Activated naive CD4-positive, alpha-beta T cell treated with anti-CD3 and anti-CD28 coated beads for 36 hours (primary cell): ENCODE measurements at regions of chr18 and their contacts with region 1.

Region 1: GRCh38 chr18:62784966-62785413 is 69.6 kb downstream of the PHLPP1 start:
- DNase-seq: no peak
- H3K4me3 Mint-ChIP-seq: no peak overlapping the region
- H3K27ac Mint-ChIP-seq: no peak overlapping the region
- H3K4me1 Mint-ChIP-seq: peaks cover 37% of the 10 kb centered on the region
- H3K27me3 Mint-ChIP-seq: peaks cover 5% of the 10 kb centered on the region

Region 2: GRCh38 chr18:62239475-62239874 is 545.5 kb before region 1 on chr18:
- CTCF ChIA-PET with region 1: no interaction called
- intact Hi-C with region 1: no loop called
- DNase-seq: no peak
- H3K4me3 Mint-ChIP-seq: no peak overlapping the region
- H3K27ac Mint-ChIP-seq: no peak overlapping the region
- H3K4me1 Mint-ChIP-seq: peaks cover 3% of the 10 kb centered on the region
- H3K27me3 Mint-ChIP-seq: no peaks in the 10 kb centered on the region

Region 3: DNA sequence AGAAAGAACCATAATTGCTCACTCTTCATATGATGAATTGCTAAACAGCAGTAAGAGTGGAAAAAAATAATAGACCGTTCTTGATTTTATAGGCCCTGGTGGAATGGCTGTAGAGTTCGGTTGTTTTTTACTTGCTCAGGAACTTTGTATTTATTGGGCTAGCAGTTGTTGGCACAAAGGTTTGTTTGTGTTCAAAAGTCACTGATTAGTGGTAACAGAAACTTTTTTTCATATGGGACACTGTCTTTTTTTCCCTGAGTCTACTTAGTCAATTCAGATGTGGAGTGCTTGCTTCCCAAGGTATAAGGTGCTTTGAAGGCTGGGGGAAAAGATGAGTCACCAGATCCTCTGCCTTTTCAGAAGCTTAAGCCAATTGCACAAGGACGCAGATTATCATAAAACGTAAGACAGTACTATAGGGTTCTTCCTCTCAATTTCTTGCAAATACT is 43.8 kb before region 1 on chr18:
- CTCF ChIA-PET with region 1: no interaction called
- intact Hi-C with region 1: loop called (anchors 1 kb)
- DNase-seq: peak; percentile 66
- H3K4me3 Mint-ChIP-seq: no peak overlapping the region
- H3K27ac Mint-ChIP-seq: no peak overlapping the region
- H3K4me1 Mint-ChIP-seq: peaks cover 16% of the 10 kb centered on the region
- H3K27me3 Mint-ChIP-seq: no peaks in the 10 kb centered on the region

Region 4: DNA sequence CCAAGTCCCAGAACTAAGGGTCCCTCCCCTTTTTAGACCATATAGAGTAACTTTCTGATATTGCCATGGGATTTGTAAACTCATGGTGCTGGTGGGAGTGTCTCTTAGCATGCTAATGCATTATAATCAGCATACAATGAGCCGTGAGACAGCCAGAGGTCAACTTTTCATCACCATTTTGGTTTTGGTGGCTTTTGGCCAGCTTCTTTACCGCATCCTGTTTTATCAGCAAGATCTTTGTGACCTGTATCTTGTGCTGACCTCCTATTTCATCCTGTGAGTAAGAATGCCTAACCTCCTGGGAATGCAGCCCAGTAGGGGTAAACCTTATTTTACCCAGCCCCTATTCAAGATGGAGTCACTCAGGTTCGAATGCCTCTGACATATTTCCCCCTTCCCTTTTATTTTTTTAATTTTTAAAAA is 78.6 kb after region 1 on chr18:
- CTCF ChIA-PET with region 1: no interaction called
- intact Hi-C with region 1: no loop called
- DNase-seq: no peak
- H3K4me3 Mint-ChIP-seq: no peak overlapping the region
- H3K27ac Mint-ChIP-seq: no peak overlapping the region
- H3K4me1 Mint-ChIP-seq: peaks cover 2% of the 10 kb centered on the region
- H3K27me3 Mint-ChIP-seq: no peaks in the 10 kb centered on the region